ENCODE measurements at regions of chr17 and their contacts with region 1.

Region 1: DNA sequence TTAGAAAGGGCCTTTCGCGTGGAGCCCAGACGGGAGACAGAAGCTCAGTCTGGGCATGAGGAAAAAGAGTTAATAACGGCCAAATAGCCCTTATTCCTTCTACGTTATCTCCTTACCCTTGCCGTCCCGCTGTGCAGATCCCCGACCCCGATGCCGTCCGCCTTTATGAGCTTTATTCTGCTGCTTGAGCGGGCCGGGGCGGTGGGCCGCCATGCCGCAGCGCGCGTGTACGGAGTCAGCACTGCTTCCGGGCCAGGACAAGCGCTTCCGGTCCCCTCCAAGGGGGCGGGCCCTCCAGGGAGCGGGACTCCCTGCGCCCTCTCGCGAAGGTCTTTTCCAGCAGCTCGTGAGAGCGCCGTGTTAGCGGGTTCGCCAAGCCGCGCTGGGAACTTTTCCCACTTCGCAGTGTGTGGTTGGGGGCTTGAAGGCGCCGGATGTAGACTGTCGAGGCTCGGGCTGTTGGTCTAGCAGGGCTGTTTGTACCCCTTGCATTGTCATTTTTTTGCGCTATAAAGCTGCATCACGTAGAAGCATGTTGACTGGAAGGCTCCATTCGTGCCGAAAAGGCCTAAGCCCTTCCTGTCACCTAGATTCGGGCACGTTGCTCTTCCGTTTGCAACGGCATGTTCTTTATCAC is at the start of gene TSR1:
- DNase-seq: peak; percentile 84 to 92 (median 85)
- H3K4me3 ChIP-seq: peak within 1 kb of the TSS; percentile 98
- H3K4me3 Mint-ChIP-seq: peak within 1 kb of the TSS in 6 of 7 donors; percentile 93 to 99 (median 98)
- H3K27ac ChIP-seq: peak within 1 kb of the TSS; percentile 64
- H3K27ac Mint-ChIP-seq: peak within 1 kb of the TSS in 7 of 8 donors; percentile 89 to 98 (median 96)
- H3K4me1 ChIP-seq: peaks cover 20% of the 10 kb centered on the region
- H3K4me1 Mint-ChIP-seq: peaks cover 30 to 35% (median 31%) of the 10 kb centered on the region in 3 donors
- H3K27me3 ChIP-seq: no peaks in the 10 kb centered on the region
- H3K27me3 Mint-ChIP-seq: no peaks in the 10 kb centered on the region
- total RNA-seq, gene TSR1: 97.7 to 99.4 TPM

Region 2: GRCh38 chr17:2275722-2276121 is 60.6 kb before region 1 on chr17:
- CTCF ChIA-PET with region 1: no interaction called
- POLR2A ChIA-PET with region 1: no interaction called
- DNase-seq: peak in 2 of 5 donors; percentile 22 to 63
- H3K4me3 ChIP-seq: no peak overlapping the region
- H3K4me3 Mint-ChIP-seq: peak overlapping the region in 3 of 7 donors; percentile 6 to 52 (median 41)
- H3K27ac ChIP-seq: no peak overlapping the region
- H3K27ac Mint-ChIP-seq: peak overlapping the region in 7 of 8 donors; percentile 1 to 89 (median 63)
- H3K4me1 ChIP-seq: peaks cover 37% of the 10 kb centered on the region
- H3K4me1 Mint-ChIP-seq: peaks cover 32 to 47% (median 40%) of the 10 kb centered on the region in 3 donors
- H3K27me3 ChIP-seq: no peaks in the 10 kb centered on the region
- H3K27me3 Mint-ChIP-seq: no peaks in the 10 kb centered on the region

Region 3: DNA sequence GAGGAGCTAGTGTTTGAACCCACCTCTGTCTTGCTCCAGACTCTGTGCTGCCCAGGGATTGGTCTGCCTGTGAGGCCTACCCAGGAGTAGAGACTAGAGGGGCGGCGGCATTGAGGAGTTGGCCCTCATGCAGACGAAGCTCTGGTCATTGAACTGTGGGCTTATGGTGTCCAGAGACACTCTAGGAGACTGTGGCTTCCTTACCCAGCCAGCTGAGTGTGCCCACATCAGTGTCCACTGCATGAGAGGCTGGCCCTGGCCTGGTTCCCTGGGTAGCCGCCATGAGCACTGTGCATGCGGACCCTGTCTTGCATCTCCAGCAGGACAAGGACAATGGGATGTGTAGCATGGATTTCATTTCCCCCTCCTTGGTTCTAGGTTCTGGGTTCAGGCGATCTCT is 14.9 kb after region 1 on chr17:
- CTCF ChIA-PET with region 1: interaction called, 20 read pairs
- POLR2A ChIA-PET with region 1: interaction called, 8 read pairs
- DNase-seq: no peak
- H3K4me3 ChIP-seq: no peak overlapping the region
- H3K4me3 Mint-ChIP-seq: no peak overlapping the region
- H3K27ac ChIP-seq: no peak overlapping the region
- H3K27ac Mint-ChIP-seq: no peak overlapping the region
- H3K4me1 ChIP-seq: peaks cover 19% of the 10 kb centered on the region
- H3K4me1 Mint-ChIP-seq: peaks cover 17 to 22% (median 18%) of the 10 kb centered on the region in 3 donors
- H3K27me3 ChIP-seq: no peaks in the 10 kb centered on the region
- H3K27me3 Mint-ChIP-seq: no peaks in the 10 kb centered on the region

Region 4: DNA sequence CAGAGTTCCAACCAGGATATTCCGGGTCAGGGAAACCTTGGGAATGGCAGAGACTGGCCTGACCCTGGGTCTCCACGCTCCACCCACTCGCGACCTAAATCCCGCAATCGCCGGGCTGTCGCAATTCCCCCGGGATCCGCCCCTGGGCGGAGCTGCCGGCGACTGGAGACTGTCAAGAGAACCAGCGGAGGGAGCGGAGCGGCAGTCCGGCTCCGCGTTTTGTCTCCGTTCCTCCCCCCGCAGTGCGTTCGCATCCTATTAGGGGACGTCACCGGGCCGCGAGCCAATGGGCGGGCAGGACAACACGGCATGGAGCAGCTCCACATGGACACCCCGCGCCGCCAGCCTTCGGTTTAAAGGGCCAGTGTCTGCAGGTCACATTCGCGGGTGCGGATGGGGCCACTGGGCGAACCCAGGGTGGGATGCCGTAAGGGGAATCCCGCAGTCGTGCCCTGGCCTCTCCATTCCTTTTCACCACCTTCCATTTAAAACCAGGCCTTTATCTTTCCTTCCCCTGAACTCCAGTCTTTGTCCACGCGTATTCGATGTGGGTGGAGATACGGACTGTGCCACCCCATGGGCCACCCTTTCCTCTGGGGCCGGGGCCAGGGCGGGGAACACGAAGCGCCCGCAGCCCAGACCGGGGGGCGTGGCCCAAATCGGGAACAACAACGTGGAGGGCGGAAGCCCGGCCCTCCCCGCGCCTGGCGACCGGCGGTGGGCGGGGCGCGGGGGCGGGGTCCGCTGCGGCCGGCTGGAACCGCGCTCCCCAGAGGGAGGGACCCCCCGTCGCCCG is 65.3 kb after region 1 on chr17:
- CTCF ChIA-PET with region 1: interaction called, 3 read pairs
- POLR2A ChIA-PET with region 1: interaction called, 24 read pairs
- DNase-seq: peak; percentile 99 to 100 (median 100)
- H3K4me3 ChIP-seq: peak overlapping the region; percentile 79
- H3K4me3 Mint-ChIP-seq: peak overlapping the region; percentile 90 to 100 (median 98)
- H3K27ac ChIP-seq: peak overlapping the region; percentile 96
- H3K27ac Mint-ChIP-seq: peak overlapping the region; percentile 98 to 100 (median 99)
- H3K4me1 ChIP-seq: peaks cover 35% of the 10 kb centered on the region
- H3K4me1 Mint-ChIP-seq: peaks cover 31 to 42% (median 36%) of the 10 kb centered on the region in 3 donors
- H3K27me3 ChIP-seq: no peaks in the 10 kb centered on the region
- H3K27me3 Mint-ChIP-seq: peaks cover 0 to 3% of the 10 kb centered on the region in 2 donors